MCF 10A (cell line): ENCODE measurements at regions of chr4 and their contacts with region 1.

Region 1: GRCh38 chr4:71941001-71941400 is 90.8 kb upstream of the NPFFR2 start:
- DNase-seq: peak; percentile 36
- H3K4me3 Mint-ChIP-seq: no peak overlapping the region
- H3K27ac Mint-ChIP-seq: no peak overlapping the region
- H3K4me1 Mint-ChIP-seq: peaks cover 15% of the 10 kb centered on the region
- H3K27me3 Mint-ChIP-seq: no peaks in the 10 kb centered on the region
- CTCF ChIP-seq: peak; percentile 37

Region 2: GRCh38 chr4:71732706-71733105 is 208.3 kb before region 1 on chr4:
- CTCF ChIA-PET with region 1: no interaction called
- POLR2A ChIA-PET with region 1: no interaction called
- intact Hi-C with region 1: loop called (anchors 2 kb)
- DNase-seq: peak; percentile 54
- H3K4me3 Mint-ChIP-seq: no peak overlapping the region
- H3K27ac Mint-ChIP-seq: no peak overlapping the region
- H3K4me1 Mint-ChIP-seq: no peaks in the 10 kb centered on the region
- H3K27me3 Mint-ChIP-seq: no peaks in the 10 kb centered on the region
- CTCF ChIP-seq: peak; percentile 56

Region 3: GRCh38 chr4:71772592-71772991 is 168.4 kb before region 1 on chr4:
- CTCF ChIA-PET with region 1: no interaction called
- POLR2A ChIA-PET with region 1: no interaction called
- intact Hi-C with region 1: loop called (anchors 5 kb)
- DNase-seq: peak; percentile 8
- H3K4me3 Mint-ChIP-seq: no peak overlapping the region
- H3K27ac Mint-ChIP-seq: no peak overlapping the region
- H3K4me1 Mint-ChIP-seq: peaks cover 6% of the 10 kb centered on the region
- H3K27me3 Mint-ChIP-seq: no peaks in the 10 kb centered on the region
- CTCF ChIP-seq: peak; percentile 26

Region 4: GRCh38 chr4:72326692-72327632 is 386.0 kb after region 1 on chr4:
- CTCF ChIA-PET with region 1: no interaction called
- POLR2A ChIA-PET with region 1: no interaction called
- intact Hi-C with region 1: no loop called
- DNase-seq: peak; percentile 53
- H3K4me3 Mint-ChIP-seq: no peak overlapping the region
- H3K27ac Mint-ChIP-seq: no peak overlapping the region
- H3K4me1 Mint-ChIP-seq: no peaks in the 10 kb centered on the region
- H3K27me3 Mint-ChIP-seq: no peaks in the 10 kb centered on the region
- CTCF ChIP-seq: peak; percentile 53